Posterior vena cava (tissue), 2 donors: ENCODE measurements at regions of chr6 and their contacts with region 1.

Region 1: GRCh38 chr6:20126789-20127653 is 85.2 kb downstream of the MBOAT1 start:
- DNase-seq: peak; percentile 88

Region 2: GRCh38 chr6:19945843-19946358 is 181.1 kb before region 1 on chr6:
- intact Hi-C with region 1: no loop called
- DNase-seq: no peak

Region 3: GRCh38 chr6:20212392-20213217 is 85.6 kb after region 1 on chr6 and contains the start of gene MBOAT1:
- intact Hi-C with region 1: loop called (anchors 5 kb)
- DNase-seq: peak; percentile 97
- total RNA-seq, gene MBOAT1: 6.1 to 8.7 TPM

Region 4: GRCh38 chr6:20260360-20260759 is 133.3 kb after region 1 on chr6:
- intact Hi-C with region 1: no loop called
- DNase-seq: no peak